ENCODE measurements at regions of chr11 and their contacts with region 1.

Region 1: GRCh38 chr11:94171693-94172440 is 43.2 kb downstream of the PANX1 start:
- DNase-seq: peak; percentile 61
- ATAC-seq: peak; percentile 57

Region 2: GRCh38 chr11:93817426-93818348 is 354.2 kb before region 1 on chr11:
- intact Hi-C with region 1: no loop called
- DNase-seq: no peak
- ATAC-seq: peak; percentile 74

Region 3: DNA sequence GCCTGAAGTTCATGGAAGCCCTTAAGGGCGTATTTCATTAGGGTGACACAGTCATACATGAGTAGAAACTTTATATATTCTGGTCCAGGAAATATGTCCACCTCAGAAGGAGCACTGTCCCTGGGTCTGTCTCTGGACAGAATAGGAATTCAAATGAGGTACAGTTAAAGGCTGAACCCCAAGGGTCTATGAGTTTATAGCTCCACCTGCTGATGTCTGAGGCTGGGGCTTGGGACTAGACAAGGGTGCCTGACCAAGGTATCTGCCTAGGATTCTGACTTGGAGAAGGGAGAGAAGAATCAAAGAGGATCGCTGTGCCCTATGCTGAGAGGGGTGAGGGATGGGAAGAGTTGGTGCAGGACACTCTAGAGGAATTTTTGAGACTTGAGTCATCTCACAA is 135.8 kb before region 1 on chr11:
- intact Hi-C with region 1: loop called (anchors 5 kb)
- DNase-seq: no peak
- ATAC-seq: no peak

Region 4: DNA sequence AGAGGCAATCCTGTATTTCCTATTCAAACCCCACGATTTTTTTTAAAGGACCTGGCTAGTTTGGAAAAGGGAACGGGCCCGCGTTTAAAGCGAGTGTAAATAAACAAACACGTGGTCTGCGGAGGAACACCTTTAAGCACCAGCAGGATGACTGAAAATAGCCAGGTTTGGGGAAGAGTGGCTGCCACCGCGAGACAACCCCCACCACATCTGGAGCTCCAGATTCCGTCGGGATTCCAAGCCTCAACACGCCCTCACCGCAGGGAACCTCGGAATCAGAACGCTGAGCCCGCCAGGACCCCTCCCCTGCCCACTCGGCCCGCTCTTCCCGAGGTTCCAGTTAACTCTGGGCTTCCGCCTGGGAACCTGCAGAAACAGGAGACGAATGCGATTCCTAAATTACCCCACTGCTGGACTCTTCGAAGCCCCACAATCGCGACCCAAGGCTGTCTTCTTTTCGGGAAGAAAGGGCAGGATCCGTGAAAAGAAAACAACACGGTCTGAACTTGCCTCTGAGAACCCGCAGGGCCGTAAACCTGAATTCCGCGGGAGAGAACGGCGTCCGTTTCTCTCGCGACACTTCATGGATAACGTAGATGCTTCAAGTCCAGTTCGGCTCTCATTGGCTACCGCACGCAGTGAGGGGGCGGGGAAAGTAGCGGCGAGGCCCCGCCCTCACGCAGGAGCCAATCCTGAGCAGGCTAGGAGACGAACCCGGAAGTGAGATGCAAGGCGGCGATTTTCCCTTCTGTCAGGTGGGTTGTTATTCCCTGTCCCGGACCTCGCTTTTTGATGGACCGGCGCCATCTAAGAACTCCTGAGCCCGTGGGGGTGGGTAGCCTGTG is 321.6 kb after region 1 on chr11 and contains the starts of genes ANKRD49 and MRE11:
- intact Hi-C with region 1: loop called (anchors 10 kb)
- DNase-seq: peak; percentile 97
- ATAC-seq: peak; percentile 100
- total RNA-seq, gene ANKRD49: 6.0 TPM
- total RNA-seq, gene MRE11: 7.4 TPM